ENCODE measurements at regions of chr3 and their contacts with region 1.

Region 1: GRCh38 chr3:141231101-141231935 is at the start of gene PXYLP1:
- DNase-seq: peak; percentile 91
- H3K4me3 Mint-ChIP-seq: peak within 1 kb of the TSS; percentile 85
- H3K27ac Mint-ChIP-seq: peak within 1 kb of the TSS; percentile 97
- H3K4me1 Mint-ChIP-seq: peaks cover 56% of the 10 kb centered on the region
- H3K27me3 Mint-ChIP-seq: peaks cover 2% of the 10 kb centered on the region
- total RNA-seq, gene PXYLP1: 11.9 to 12.1 TPM

Region 2: GRCh38 chr3:141243271-141243707 is 12.0 kb after region 1 on chr3:
- CTCF ChIA-PET with region 1: interaction called, 36 read pairs
- POLR2A ChIA-PET with region 1: interaction called, 4 read pairs
- DNase-seq: peak; percentile 56
- H3K4me3 Mint-ChIP-seq: peak overlapping the region; percentile 43
- H3K27ac Mint-ChIP-seq: peak overlapping the region; percentile 71
- H3K4me1 Mint-ChIP-seq: peaks cover 42% of the 10 kb centered on the region
- H3K27me3 Mint-ChIP-seq: no peaks in the 10 kb centered on the region

Region 3: DNA sequence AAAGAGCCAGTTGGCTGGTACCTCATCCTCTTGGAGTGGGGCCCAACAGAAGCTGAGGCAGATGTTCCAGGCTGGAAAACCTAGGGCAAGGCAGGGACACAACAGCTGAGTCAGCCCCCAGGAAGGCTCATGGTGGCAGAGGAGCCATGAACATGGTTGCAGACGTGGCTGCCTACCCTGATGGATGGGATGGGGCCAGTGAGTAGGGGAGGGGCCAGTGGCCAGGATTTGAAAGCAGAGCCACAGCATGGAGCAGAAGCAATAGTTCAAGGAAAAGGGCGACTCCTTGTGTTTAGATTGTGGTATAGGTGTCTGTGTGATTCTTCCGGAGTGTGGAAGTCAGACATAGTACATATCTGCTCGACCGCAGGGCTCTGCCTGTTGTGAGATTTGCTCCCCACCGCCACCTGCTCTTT is 24.5 kb after region 1 on chr3:
- CTCF ChIA-PET with region 1: interaction called, 36 read pairs
- POLR2A ChIA-PET with region 1: interaction called, 4 read pairs
- DNase-seq: peak; percentile 61
- H3K4me3 Mint-ChIP-seq: no peak overlapping the region
- H3K27ac Mint-ChIP-seq: peak overlapping the region; percentile 67
- H3K4me1 Mint-ChIP-seq: peaks cover 31% of the 10 kb centered on the region
- H3K27me3 Mint-ChIP-seq: no peaks in the 10 kb centered on the region

Region 4: GRCh38 chr3:141279077-141279967 is 48.0 kb after region 1 on chr3:
- CTCF ChIA-PET with region 1: interaction called, 10 read pairs
- POLR2A ChIA-PET with region 1: interaction called, 3 read pairs
- DNase-seq: no peak
- H3K4me3 Mint-ChIP-seq: no peak overlapping the region
- H3K27ac Mint-ChIP-seq: peak overlapping the region; percentile 1
- H3K4me1 Mint-ChIP-seq: peaks cover 24% of the 10 kb centered on the region
- H3K27me3 Mint-ChIP-seq: no peaks in the 10 kb centered on the region